SK-N-SH (cell line): ENCODE measurements at regions of chr12 and their contacts with region 1.

Region 1: DNA sequence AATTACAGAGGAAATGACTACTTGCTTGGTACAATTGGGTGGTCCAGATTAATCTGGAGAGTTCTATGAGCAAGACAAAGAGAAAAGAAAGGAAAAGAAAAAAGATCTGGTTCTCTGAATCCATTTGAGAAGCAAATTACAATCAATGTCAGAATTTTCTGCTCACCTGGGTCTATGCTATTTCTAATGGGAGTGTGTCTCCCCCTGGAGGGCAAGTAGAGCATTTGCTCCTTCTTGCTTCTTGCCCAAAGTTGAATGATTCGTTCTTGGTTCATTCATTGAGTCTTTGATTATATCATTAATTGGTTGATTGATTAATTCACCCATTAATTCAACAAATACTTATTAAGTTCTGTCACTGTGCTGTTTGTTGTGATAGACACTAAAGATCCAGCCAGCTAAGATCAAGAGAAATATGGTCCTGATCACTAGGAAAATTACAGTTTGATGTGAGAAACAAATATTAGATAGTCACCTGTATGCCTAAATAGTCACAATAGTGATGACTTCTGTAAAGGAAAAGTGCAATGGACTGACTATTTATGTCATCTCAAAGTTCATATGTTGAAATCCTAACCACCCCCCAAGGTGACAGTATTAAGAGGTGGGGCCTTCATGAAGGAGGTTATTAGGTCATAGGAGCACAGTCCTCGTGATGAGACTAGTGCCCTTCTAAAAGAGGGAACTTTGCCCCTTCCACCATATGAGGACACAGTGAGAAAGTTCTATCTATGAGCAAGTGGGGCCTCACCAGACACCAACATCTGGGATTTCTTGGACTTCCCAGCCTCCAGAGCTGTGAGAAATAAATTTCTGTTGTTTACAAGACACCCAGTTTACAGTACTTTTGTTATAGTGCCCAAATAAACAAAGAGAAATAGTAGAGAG is 8.0 kb upstream of the ASB8 start:
- DNase-seq: peak; percentile 67
- H3K4me3 ChIP-seq: peak overlapping the region in 1 of 2 experiments; percentile 32; a peak in 1 of 4 replicates
- H3K27ac ChIP-seq: no peak overlapping the region
- H3K4me1 ChIP-seq: no peaks in the 10 kb centered on the region; a peak in 1 of 4 replicates
- H3K27me3 ChIP-seq: no peaks in the 10 kb centered on the region
- CTCF ChIP-seq: peak; percentile 94
- EP300 ChIP-seq: no peak
- RAD21 ChIP-seq: peak; percentile 85

Region 2: GRCh38 chr12:47547085-47547484 is 618.3 kb before region 1 on chr12:
- CTCF ChIA-PET with region 1: no interaction called
- POLR2A ChIA-PET with region 1: no interaction called
- DNase-seq: no peak
- H3K4me3 ChIP-seq: no peak overlapping the region
- H3K27ac ChIP-seq: no peak overlapping the region
- H3K4me1 ChIP-seq: no peaks in the 10 kb centered on the region
- H3K27me3 ChIP-seq: peaks cover 19% of the 10 kb centered on the region; the same call in 1 of the 2 replicates
- CTCF ChIP-seq: peak; percentile 54
- EP300 ChIP-seq: no peak
- RAD21 ChIP-seq: peak; percentile 39

Region 3: GRCh38 chr12:47955059-47955458 is 210.3 kb before region 1 on chr12:
- CTCF ChIA-PET with region 1: no interaction called
- POLR2A ChIA-PET with region 1: no interaction called
- DNase-seq: no peak
- H3K4me3 ChIP-seq: no peak overlapping the region
- H3K27ac ChIP-seq: no peak overlapping the region
- H3K4me1 ChIP-seq: peaks cover 0 to 10% of the 10 kb centered on the region in 2 experiments; a peak in 1 of 4 replicates
- H3K27me3 ChIP-seq: peaks cover 5% of the 10 kb centered on the region; the same call in 1 of the 2 replicates
- CTCF ChIP-seq: no peak
- EP300 ChIP-seq: no peak
- RAD21 ChIP-seq: no peak

Region 4: GRCh38 chr12:48084066-48084465 is 81.3 kb before region 1 on chr12:
- CTCF ChIA-PET with region 1: interaction called, 33 read pairs
- POLR2A ChIA-PET with region 1: no interaction called
- DNase-seq: peak; percentile 14
- H3K4me3 ChIP-seq: no peak overlapping the region
- H3K27ac ChIP-seq: no peak overlapping the region
- H3K4me1 ChIP-seq: no peaks in the 10 kb centered on the region
- H3K27me3 ChIP-seq: no peaks in the 10 kb centered on the region
- CTCF ChIP-seq: peak; percentile 59
- EP300 ChIP-seq: no peak
- RAD21 ChIP-seq: peak; percentile 63

Region 5: GRCh38 chr12:48175613-48176416 is 10.5 kb after region 1 on chr12:
- CTCF ChIA-PET with region 1: interaction called, 18 read pairs
- POLR2A ChIA-PET with region 1: no interaction called
- DNase-seq: no peak
- H3K4me3 ChIP-seq: peak overlapping the region in 1 of 2 experiments; percentile 22; a peak in 1 of 4 replicates
- H3K27ac ChIP-seq: peak overlapping the region in 1 of 2 experiments; percentile 59; a peak in 2 of 4 replicates
- H3K4me1 ChIP-seq: no peaks in the 10 kb centered on the region; a peak in 1 of 4 replicates
- H3K27me3 ChIP-seq: 0 out of 2 replicates have a peak, but pooled peaks cover 7% of the 10 kb centered on the region
- CTCF ChIP-seq: no peak
- EP300 ChIP-seq: no peak
- RAD21 ChIP-seq: no peak

Region 6: GRCh38 chr12:48189331-48190125 is 24.2 kb after region 1 on chr12:
- CTCF ChIA-PET with region 1: interaction called, 11 read pairs
- POLR2A ChIA-PET with region 1: no interaction called
- DNase-seq: peak; percentile 66
- H3K4me3 ChIP-seq: no peak overlapping the region; a peak in 1 of 4 replicates
- H3K27ac ChIP-seq: no peak overlapping the region
- H3K4me1 ChIP-seq: peaks cover 14 to 27% of the 10 kb centered on the region in 2 experiments
- H3K27me3 ChIP-seq: no peaks in the 10 kb centered on the region
- CTCF ChIP-seq: peak; percentile 86
- EP300 ChIP-seq: no peak
- RAD21 ChIP-seq: peak; percentile 87